AG04449 (cell line): ENCODE measurements at regions of chr15 and their contacts with region 1.

Region 1: DNA sequence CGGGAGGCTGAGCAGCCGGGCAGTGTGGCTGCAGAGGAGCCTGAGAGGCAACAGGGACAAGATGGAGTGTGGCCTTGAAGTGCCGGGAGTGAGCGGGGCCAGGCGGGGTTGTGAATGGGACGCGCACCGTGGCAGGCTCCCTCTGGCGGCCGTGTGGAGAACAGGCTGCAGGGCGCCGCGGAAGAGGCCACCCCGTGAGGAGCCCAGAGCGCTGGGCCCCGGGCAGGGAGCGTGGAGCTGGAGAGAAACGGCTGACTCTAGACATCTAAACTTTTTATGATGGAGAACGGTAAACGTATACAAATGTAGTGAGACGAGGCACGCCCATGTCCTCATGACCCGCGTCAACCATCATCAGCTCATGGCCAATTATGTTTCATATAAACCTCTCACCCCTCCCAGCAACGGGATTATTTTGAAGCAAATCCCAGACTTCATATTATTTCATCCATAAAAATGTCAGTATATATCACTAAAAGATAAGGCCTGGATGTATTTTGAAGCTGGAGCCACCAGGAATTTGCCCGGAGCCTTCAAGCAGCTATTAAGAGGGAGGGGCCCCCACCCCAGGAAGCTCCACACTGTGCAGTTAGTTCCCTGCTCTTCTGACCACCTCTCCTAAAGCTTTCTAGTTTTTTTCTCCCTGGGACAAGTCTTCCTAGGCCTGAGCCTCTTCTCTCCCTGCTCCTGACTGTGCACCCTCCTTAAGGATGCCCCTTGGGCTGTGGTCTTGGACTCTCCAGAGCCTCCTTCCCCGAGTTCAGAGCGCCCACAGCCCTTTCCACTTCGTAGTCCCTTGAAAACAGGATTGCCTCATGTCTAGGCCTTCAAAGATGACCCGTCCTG is 149.4 kb downstream of the SMAD6 start:
- DNase-seq: no peak
- H3K4me3 ChIP-seq: no peak overlapping the region
- CTCF ChIP-seq: peak; percentile 98

Region 2: DNA sequence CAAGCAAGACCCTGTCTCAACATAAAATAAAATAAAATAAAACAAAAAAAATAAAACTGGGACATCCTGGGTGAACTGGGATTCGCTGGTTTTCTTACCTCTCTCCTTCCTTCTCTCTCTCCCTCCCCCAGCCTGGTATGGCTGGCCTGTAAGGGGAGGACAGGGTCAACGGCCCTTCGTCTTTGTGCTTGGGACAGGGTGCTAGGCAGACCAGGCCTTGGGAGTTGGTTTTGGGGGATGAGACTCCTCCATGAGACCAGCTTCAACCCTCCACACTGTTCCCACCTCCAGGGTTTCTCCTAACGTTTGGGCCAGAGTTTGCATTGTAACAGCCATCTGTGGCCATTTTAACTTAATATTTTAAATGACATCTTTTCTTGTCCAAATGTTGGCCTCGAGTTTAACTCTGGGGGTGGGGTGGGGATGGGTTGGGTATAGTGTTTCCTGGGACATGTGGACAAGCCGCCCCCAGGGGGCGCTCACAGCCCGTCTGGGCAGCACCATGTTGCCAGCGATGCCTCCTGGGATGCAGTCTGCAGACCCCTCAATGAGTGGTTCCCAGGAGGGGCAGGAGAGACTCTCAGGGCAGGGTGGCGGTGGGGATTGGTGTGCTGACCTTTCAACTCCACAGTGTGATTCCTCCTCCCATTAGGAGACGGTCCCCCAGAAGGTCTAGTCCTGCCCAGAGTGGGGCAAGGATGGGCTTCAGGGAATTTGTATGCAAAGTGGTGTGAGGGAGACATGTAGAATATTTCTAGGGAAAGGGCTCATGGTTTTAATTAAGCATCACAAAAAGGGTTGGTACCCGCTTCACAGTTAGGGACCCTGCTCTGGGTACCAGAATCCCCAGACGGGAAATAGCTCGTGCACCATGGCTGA is 247.9 kb before region 1 on chr15:
- CTCF ChIA-PET with region 1: interaction called, 125 read pairs
- POLR2A ChIA-PET with region 1: no interaction called
- DNase-seq: no peak
- H3K4me3 ChIP-seq: no peak overlapping the region
- CTCF ChIP-seq: peak; percentile 80

Region 3: GRCh38 chr15:66700802-66701421 is 150.5 kb before region 1 on chr15:
- CTCF ChIA-PET with region 1: interaction called, 234 read pairs
- POLR2A ChIA-PET with region 1: interaction called, 3 read pairs
- DNase-seq: peak; percentile 62
- H3K4me3 ChIP-seq: peak overlapping the region; percentile 69
- CTCF ChIP-seq: no peak

Region 4: GRCh38 chr15:66774001-66774814 is 77.2 kb before region 1 on chr15:
- CTCF ChIA-PET with region 1: interaction called, 192 read pairs
- POLR2A ChIA-PET with region 1: no interaction called
- DNase-seq: no peak
- H3K4me3 ChIP-seq: no peak overlapping the region
- CTCF ChIP-seq: peak; percentile 99

Region 5: GRCh38 chr15:66815322-66815721 is 36.1 kb before region 1 on chr15:
- CTCF ChIA-PET with region 1: interaction called, 15 read pairs
- POLR2A ChIA-PET with region 1: no interaction called
- DNase-seq: peak; percentile 89
- H3K4me3 ChIP-seq: no peak overlapping the region
- CTCF ChIP-seq: no peak

Region 6: DNA sequence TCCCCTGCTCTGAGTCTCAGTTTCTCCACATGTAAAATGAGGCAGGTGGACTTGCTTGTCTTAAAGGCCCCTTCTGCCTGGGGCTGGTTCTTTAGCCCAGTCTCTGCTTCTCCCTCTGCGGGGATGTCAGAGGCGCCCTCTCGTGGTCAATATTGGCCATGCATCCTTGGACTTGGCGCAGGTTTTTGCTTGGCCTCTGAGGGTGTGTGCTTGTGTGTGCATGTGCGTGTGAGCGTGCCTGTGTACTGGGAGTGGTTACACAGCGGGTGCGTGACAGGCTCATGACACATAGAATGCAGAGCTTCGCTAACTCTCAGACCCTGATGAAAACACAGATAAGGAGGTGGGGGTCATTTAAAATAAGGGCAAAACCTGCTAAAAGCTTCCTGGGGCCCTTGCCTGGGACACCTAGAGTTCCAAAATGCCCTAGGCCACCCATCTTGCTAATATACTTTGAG is 11.5 kb after region 1 on chr15:
- CTCF ChIA-PET with region 1: interaction called, 57 read pairs
- POLR2A ChIA-PET with region 1: no interaction called
- DNase-seq: peak; percentile 38
- H3K4me3 ChIP-seq: no peak overlapping the region
- CTCF ChIP-seq: peak; percentile 95

Region 7: DNA sequence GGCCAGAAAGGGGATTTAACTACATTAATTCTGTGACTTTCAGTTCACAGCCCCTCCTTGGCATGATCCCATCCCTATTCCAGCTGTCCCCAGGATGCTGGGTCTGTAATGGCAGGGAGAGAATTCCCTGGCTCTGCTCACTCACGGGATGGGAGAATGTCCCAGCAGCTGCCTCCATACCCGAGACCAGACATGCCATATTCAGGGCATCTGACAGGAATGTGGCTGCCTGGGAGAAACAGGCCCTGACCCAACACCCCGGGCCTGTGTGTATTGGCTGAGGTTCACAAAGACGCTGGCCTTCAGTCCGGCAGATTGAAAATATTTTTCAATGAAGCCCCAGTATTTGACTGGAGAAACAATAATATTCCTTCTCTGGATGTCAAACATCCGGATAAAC is 130.3 kb after region 1 on chr15:
- CTCF ChIA-PET with region 1: no interaction called
- POLR2A ChIA-PET with region 1: no interaction called
- DNase-seq: no peak
- H3K4me3 ChIP-seq: no peak overlapping the region
- CTCF ChIP-seq: no peak